ENCODE measurements at regions of chr13 and their contacts with region 1.

Region 1: GRCh38 chr13:110455941-110456340 is 105.6 kb downstream of the RAB20 start:
- DNase-seq: no peak
- H3K4me3 ChIP-seq: no peak overlapping the region
- CTCF ChIP-seq: peak; percentile 86

Region 2: GRCh38 chr13:110431425-110432294 is 24.3 kb before region 1 on chr13:
- CTCF ChIA-PET with region 1: interaction called, 10 read pairs
- POLR2A ChIA-PET with region 1: no interaction called
- DNase-seq: no peak
- H3K4me3 ChIP-seq: no peak overlapping the region
- CTCF ChIP-seq: no peak

Region 3: GRCh38 chr13:110479689-110480088 is 23.7 kb after region 1 on chr13:
- CTCF ChIA-PET with region 1: interaction called, 14 read pairs
- POLR2A ChIA-PET with region 1: no interaction called
- DNase-seq: no peak
- H3K4me3 ChIP-seq: no peak overlapping the region
- CTCF ChIP-seq: no peak

Region 4: GRCh38 chr13:110615322-110616102 is 159.6 kb after region 1 on chr13 and contains the start of gene NAXD:
- CTCF ChIA-PET with region 1: interaction called, 32 read pairs
- POLR2A ChIA-PET with region 1: interaction called, 3 read pairs
- DNase-seq: peak; percentile 58
- H3K4me3 ChIP-seq: peak within 1 kb of the TSS; percentile 83
- CTCF ChIP-seq: no peak

Region 5: GRCh38 chr13:110652764-110653163 is 196.8 kb after region 1 on chr13:
- CTCF ChIA-PET with region 1: no interaction called
- POLR2A ChIA-PET with region 1: no interaction called
- DNase-seq: no peak
- H3K4me3 ChIP-seq: no peak overlapping the region
- CTCF ChIP-seq: no peak